Right ventricle myocardium inferior (tissue), 1 donor: ENCODE measurements at regions of chr16 and their contacts with region 1.

Region 1: GRCh38 chr16:12529582-12529981 is 274.1 kb downstream of the CPPED1 start:
- DNase-seq: no peak
- ATAC-seq: peak; percentile 20

Region 2: GRCh38 chr16:12120217-12120981 is 409.2 kb before region 1 on chr16:
- intact Hi-C with region 1: no loop called
- DNase-seq: no peak
- ATAC-seq: peak; percentile 80

Region 3: DNA sequence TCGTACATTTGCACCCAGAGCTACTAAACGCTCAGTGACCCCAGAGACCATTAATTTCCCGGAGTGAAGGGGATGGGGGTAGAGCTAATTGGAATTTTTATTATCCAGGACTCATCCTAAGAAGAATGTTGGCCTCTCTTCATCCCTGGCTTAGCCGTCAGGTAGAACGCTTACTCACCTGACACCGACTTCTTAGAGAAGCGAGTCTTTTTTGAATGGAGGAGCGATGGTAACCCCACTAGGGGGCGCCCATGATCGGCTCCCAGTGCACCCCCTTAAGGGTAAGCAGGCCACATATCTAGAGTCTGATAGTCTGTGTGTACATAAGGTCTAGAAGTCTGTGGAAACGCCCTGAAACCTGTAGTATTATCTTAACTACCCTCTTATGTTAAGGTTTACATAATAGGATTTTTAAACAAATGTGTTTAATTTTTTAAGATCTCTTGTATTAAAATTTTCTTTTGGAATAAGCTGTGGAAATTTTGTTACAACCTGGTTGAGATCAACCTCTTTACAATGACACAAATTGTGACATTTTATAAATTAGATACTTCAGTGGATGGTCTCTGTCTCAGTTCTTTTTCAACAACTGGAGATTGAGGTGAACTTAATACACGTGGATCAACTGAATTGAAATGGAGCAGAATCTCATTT is 44.3 kb after region 1 on chr16:
- intact Hi-C with region 1: loop called (anchors 10 kb)
- DNase-seq: no peak
- ATAC-seq: peak; percentile 37